Cardiac septum (tissue), 1 donor: ENCODE measurements at regions of chr1 and their contacts with region 1.

Region 1: GRCh38 chr1:47710329-47711071 is 272.7 kb downstream of the FOXD2 start:
- DNase-seq: peak; percentile 89

Region 2: GRCh38 chr1:47013239-47013845 is 697.2 kb before region 1 on chr1:
- intact Hi-C with region 1: no loop called
- DNase-seq: no peak

Region 3: GRCh38 chr1:47179017-47179987 is 531.2 kb before region 1 on chr1:
- intact Hi-C with region 1: loop called (anchors 5 kb)
- DNase-seq: peak; percentile 87

Region 4: GRCh38 chr1:47192458-47193384 is 517.8 kb before region 1 on chr1:
- intact Hi-C with region 1: loop called (anchors 5 kb)
- DNase-seq: peak; percentile 86

Region 5: GRCh38 chr1:47388891-47389238 is 321.6 kb before region 1 on chr1:
- intact Hi-C with region 1: loop called (anchors 2 kb)
- DNase-seq: no peak

Region 6: GRCh38 chr1:47432071-47433036 is 278.1 kb before region 1 on chr1:
- intact Hi-C with region 1: loop called (anchors 1 kb)
- DNase-seq: no peak

Region 7: DNA sequence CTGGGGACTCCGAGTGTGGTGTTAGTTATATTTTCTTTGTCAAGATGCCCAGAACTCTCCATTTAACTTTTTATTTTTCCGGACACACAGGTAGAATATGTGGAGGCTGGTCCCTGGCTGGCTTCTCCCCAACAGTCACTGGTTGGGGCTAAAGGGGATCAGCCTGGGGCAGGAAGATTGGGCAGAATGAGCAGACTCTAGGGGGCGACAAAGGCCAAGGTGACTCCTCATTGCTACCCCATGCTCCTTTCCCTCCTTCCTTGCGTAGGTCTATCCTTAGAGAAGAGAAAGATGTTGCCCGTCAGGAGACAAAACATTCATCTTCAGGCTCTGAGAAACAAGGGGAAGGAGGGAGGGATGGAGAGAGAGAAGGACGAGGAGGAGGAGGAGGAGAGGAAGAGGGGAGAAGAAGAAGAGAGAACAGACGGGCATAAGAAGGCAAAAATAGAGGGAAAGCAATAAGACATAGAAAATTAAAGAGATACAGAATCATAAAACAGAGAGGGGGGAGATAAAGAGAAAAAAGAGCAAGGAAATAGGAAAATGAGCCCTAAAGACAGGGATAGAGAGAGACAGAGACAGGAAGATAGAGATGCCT is 182.7 kb before region 1 on chr1:
- intact Hi-C with region 1: loop called (anchors 5 kb)
- DNase-seq: no peak

Region 8: GRCh38 chr1:47569681-47570470 is 140.6 kb before region 1 on chr1:
- intact Hi-C with region 1: loop called (anchors 5 kb)
- DNase-seq: no peak